Dorsolateral prefrontal cortex (tissue), 120 donors: ENCODE measurements at regions of chr11 and their contacts with region 1.

Region 1: GRCh38 chr11:107043242-107044006 is 25.1 kb upstream of the GUCY1A2 start:
- DNase-seq: no peak
- H3K4me3 ChIP-seq: no peak overlapping the region
- H3K27ac ChIP-seq: peak overlapping the region in 2 of 59 donors; percentile 22 to 35
- H3K27me3 ChIP-seq: no peaks in the 10 kb centered on the region
- CTCF ChIP-seq: no peak

Region 2: GRCh38 chr11:106156290-106156937 is 887.0 kb before region 1 on chr11:
- intact Hi-C with region 1: loop called in 1 of 2 experiments (anchors 5 kb)
- DNase-seq: peak in 1 of 10 donors; percentile 29
- H3K4me3 ChIP-seq: peak overlapping the region in 1 of 59 donors; percentile 4
- H3K27ac ChIP-seq: no peak overlapping the region
- H3K27me3 ChIP-seq: no peaks in the 10 kb centered on the region
- CTCF ChIP-seq: peak in 55 of 56 donors; percentile 35 to 71 (median 57)

Region 3: DNA sequence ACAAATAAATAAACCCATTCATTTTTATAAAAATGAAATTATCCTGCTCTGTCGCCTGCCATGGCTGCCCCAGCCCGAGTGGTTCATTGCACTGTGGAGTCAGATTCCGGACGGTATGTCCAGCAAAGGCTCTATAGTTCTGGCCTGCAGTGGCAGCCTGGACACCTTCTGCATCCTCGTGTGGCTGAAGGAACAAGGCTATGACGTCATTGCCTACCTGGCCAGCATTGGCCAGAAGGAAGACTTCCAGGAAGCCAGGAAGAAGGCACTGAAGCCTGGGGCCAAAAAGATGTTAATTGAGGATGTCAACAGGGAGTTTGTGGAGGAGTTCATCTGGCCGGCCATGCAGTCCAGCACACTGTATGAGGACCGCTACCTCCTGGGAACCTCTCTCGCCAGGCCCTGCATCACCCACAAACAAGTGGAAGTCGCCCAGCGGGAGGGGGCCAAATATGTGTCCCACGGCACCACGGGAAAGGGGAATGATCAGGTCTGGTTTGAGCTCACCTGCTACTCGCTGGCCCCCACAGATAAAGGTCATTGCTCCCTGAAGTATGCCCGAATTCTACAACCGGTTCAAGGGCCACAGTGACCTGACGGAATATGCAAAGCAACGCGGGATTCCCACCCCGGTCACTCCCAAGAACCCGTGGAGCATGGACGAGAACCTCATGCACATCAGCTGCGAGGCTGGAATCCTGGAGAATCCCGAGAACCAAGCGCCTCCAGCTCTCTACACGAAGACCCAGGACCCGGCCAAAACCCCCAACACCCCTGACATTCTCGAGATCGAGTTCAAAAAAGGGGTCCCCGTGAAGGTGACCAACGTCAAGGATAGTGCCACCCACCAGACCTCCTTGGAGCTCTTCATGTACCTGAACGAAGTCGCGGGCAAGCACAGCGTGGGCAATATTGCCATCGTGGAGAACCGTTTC is 133.0 kb after region 1 on chr11:
- intact Hi-C with region 1: no loop called
- DNase-seq: no peak
- H3K4me3 ChIP-seq: no peak overlapping the region
- H3K27ac ChIP-seq: no peak overlapping the region
- H3K27me3 ChIP-seq: no peaks in the 10 kb centered on the region
- CTCF ChIP-seq: no peak